ENCODE measurements at regions of chr2 and their contacts with region 1.

Region 1: DNA sequence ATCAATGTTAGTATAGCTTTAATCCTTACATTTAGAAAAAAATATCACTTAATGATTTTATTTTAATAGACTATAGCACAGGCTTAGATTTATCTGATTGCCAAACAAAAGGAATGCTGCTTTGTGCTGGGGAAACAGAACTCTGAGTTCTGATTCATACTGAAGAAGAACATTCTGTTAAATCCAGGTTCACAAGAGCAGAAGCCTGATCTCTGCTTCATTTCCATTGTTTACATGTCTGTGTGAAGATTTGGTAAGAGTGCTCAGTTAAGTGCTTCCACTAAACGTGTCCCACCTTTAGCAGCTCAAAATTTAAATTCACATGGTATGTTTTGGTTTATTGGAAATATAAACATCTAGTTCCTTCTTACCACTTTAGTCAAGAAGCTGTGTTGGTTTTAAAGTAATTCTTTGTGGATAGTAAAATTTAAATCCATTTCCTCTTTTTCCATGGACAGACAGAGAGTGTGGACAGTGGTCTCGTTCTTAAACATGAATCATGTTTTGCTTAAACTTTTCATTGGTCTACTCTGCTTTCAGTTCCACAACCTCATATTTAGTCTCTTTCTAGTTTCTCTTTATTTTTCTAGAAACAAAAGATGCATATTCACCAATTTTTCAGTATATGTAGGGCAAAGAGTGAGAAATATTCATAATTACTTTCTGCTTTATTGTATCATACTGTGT is 59.1 kb downstream of the NYAP2 start:
- DNase-seq: no peak
- ATAC-seq: no peak
- H3K4me3 ChIP-seq: no peak overlapping the region
- H3K27ac ChIP-seq: no peak overlapping the region
- H3K4me1 ChIP-seq: no peaks in the 10 kb centered on the region
- H3K27me3 ChIP-seq: no peaks in the 10 kb centered on the region
- CTCF ChIP-seq: no peak

Region 2: DNA sequence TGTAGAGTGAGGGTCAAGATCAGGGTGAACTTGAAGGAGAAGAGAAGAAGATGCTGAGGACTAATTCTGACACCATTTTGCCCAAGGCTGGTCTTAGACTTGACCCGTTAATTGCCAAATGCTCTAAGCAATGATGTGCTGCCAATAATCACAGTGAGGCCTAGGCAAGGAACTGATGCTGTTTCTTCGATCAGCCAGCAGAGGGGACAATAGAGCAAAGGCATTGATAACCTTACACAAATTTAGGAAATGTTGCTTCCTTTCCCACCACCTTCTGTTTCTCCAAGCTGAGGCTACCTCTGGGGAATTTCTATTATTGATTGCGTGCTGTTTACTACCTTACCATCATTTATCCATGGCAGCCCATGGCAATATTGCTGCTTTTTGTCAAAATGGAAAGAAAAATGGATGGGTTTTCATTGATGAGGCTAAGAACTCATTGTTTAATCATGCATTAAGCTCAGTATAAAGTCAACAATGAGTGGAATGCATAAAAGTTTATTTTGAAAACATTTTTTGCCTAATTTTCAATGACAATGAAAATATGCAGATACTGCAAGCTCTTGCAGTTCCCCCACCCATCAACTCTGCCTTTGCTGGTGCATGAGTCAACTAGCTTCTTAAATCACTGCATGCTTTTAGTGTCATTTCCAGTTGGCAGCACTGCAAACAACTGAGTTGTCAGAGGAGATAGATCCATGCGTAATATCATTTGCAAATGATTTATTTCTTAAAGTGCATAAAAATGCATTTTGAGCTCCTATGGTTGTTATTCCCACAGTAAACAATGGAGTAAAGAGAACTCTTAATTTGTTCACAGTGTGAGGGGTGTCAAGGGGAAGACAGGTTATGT is 175.5 kb before region 1 on chr2:
- CTCF ChIA-PET with region 1: no interaction called
- POLR2A ChIA-PET with region 1: no interaction called
- intact Hi-C with region 1: loop called (anchors 10 kb)
- DNase-seq: peak; percentile 75
- ATAC-seq: peak; percentile 79
- H3K4me3 ChIP-seq: no peak overlapping the region
- H3K27ac ChIP-seq: no peak overlapping the region
- H3K4me1 ChIP-seq: peaks cover 9% of the 10 kb centered on the region
- H3K27me3 ChIP-seq: no peaks in the 10 kb centered on the region
- CTCF ChIP-seq: peak; percentile 84

Region 3: GRCh38 chr2:225526760-225527390 is 68.3 kb after region 1 on chr2:
- CTCF ChIA-PET with region 1: no interaction called
- POLR2A ChIA-PET with region 1: no interaction called
- intact Hi-C with region 1: no loop called
- DNase-seq: no peak
- ATAC-seq: no peak
- H3K4me3 ChIP-seq: no peak overlapping the region
- H3K27ac ChIP-seq: no peak overlapping the region
- H3K4me1 ChIP-seq: no peaks in the 10 kb centered on the region
- H3K27me3 ChIP-seq: peaks cover 10% of the 10 kb centered on the region
- CTCF ChIP-seq: no peak

Region 4: GRCh38 chr2:225649274-225649673 is 190.7 kb after region 1 on chr2:
- CTCF ChIA-PET with region 1: no interaction called
- POLR2A ChIA-PET with region 1: no interaction called
- intact Hi-C with region 1: no loop called
- DNase-seq: no peak
- ATAC-seq: no peak
- H3K4me3 ChIP-seq: no peak overlapping the region
- H3K27ac ChIP-seq: no peak overlapping the region
- H3K4me1 ChIP-seq: no peaks in the 10 kb centered on the region
- H3K27me3 ChIP-seq: no peaks in the 10 kb centered on the region; the same call in 1 of the 2 replicates
- CTCF ChIP-seq: no peak